ENCODE measurements at regions of chr2 and their contacts with region 1.

Region 1: DNA sequence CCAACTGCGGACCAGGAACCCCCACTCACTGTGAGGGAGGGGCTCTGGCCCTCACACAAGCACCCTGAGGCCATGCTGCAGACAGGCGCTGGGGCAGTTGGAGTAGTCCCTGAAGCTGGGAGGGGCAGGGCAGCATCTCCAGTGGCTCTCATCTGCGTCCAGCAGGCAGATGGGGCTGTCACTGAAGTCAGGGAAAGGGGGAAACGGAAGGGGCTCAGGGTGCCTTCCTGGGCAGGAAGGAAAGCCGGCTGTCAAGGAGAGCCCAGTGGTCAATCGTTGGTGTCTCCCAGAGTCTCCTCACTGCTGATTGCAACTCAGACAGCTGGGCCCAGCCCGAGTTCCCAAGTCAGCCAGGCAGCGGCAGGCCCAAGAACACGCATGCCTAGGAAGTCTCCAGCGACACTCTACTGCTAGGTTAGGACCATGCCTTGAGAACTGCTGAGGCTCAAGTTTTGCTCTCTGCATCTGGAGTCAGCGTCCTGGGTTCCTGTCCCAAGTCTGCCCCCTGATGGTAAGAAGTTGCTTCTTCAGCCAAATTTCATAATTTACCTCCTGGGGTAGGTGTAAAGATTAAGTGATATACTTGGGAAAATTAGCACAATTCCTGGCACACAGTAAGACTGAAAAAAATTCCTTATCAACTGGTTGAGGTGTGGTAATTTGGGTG is 27.5 kb upstream of the NMUR1 start:
- DNase-seq: peak; percentile 83
- H3K4me3 ChIP-seq: no peak overlapping the region
- H3K27ac ChIP-seq: peak overlapping the region in 7 of 8 donors; percentile 9 to 81 (median 46)
- H3K4me1 ChIP-seq: peaks cover 0 to 49% (median 30%) of the 10 kb centered on the region in 6 donors
- H3K27me3 ChIP-seq: no peaks in the 10 kb centered on the region
- CTCF ChIP-seq: peak in 10 of 11 experiments; percentile 51 to 88 (median 74)
- POLR2A ChIP-seq: no peak

Region 2: DNA sequence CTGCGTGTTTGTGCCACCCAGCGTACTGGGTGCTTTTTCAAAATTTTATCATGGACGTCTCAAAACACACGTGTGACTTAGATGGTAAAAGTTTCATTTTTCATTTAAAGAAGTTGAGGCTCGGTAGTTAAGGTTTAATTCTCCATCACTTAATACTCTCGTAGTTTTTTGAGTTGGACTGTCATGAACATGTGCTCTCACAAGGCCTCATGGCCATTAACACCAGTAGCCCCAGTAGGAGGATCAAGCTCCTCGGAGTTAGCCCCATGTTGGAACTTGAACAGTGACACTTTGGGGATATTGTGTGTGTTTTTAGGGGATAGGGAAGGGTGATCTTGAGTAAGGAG is 42.8 kb before region 1 on chr2:
- intact Hi-C with region 1: loop called (anchors 5 kb)
- DNase-seq: no peak
- H3K4me3 ChIP-seq: peak overlapping the region; percentile 47 to 75 (median 64)
- H3K27ac ChIP-seq: peak overlapping the region; percentile 77 to 92 (median 88)
- H3K4me1 ChIP-seq: peaks cover 0 to 30% (median 14%) of the 10 kb centered on the region in 6 donors
- H3K27me3 ChIP-seq: no peaks in the 10 kb centered on the region
- CTCF ChIP-seq: no peak
- POLR2A ChIP-seq: no peak